ENCODE measurements at regions of chr2 and their contacts with region 1.

Region 1: GRCh38 chr2:119476301-119477021 is 44.8 kb downstream of the TMEM37 start:
- DNase-seq: peak; percentile 53
- H3K4me3 ChIP-seq: no peak overlapping the region
- H3K27ac ChIP-seq: no peak overlapping the region
- H3K27me3 ChIP-seq: peaks cover 2% of the 10 kb centered on the region
- CTCF ChIP-seq: peak; percentile 97

Region 2: DNA sequence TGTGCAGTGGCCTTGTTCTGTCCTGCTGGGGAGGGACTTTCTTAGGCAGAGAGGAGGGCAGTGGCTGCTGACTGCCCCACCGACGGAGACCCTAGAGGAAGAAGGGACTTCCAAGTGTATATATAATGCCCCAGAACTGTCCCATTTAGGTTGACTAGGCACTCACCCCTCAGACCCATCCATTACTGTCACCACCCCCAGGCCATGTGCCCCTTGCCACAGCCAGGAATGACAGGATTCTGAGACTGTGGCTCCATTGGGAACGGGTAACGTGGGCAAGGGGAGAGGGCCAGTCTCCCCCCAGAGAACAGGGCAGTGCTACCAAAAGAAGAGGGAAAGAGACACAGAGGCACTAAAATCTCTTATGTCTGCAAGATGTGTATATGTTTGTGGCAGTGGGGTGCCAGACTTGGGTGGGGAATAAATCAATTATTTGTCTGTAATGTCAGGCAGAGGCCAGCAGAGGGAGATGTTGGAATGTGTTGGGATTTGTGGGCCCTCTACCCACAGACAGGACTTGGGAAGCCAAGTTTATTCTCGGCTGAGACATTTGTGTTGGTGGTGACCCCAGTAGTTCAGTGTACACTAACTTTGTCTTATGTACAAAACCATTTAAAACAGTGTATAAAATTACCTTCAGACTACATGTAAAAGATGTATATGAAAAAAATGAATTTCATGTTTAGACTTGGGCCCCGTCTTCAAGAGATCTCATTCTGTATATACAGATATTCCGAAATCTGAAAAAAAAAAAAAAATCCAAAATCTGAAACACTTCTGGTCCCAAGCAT is 68.8 kb before region 1 on chr2:
- in situ Hi-C with region 1: loop called (anchors 10 kb)
- DNase-seq: peak; percentile 46
- H3K4me3 ChIP-seq: no peak overlapping the region
- H3K27ac ChIP-seq: no peak overlapping the region
- H3K27me3 ChIP-seq: no peaks in the 10 kb centered on the region
- CTCF ChIP-seq: peak; percentile 82

Measured in brain microvascular endothelial cell (primary cell).